Activated B cell treated with CpG ODN at 0.5 μM for 24 hours (primary cell): ENCODE measurements at regions of chr6 and their contacts with region 1.

Region 1: GRCh38 chr6:105484238-105485161 is 81.6 kb upstream of the PREP start:
- DNase-seq: no peak
- ATAC-seq: no peak
- H3K4me3 Mint-ChIP-seq: no peak overlapping the region
- H3K27ac Mint-ChIP-seq: no peak overlapping the region
- H3K4me1 Mint-ChIP-seq: peaks cover 2% of the 10 kb centered on the region
- H3K27me3 Mint-ChIP-seq: peaks cover 6% of the 10 kb centered on the region
- CTCF ChIP-seq: no peak

Region 2: GRCh38 chr6:105442369-105442768 is 42.1 kb before region 1 on chr6:
- CTCF ChIA-PET with region 1: no interaction called
- POLR2A ChIA-PET with region 1: no interaction called
- intact Hi-C with region 1: no loop called
- DNase-seq: no peak
- ATAC-seq: no peak
- H3K4me3 Mint-ChIP-seq: no peak overlapping the region
- H3K27ac Mint-ChIP-seq: no peak overlapping the region
- H3K4me1 Mint-ChIP-seq: no peaks in the 10 kb centered on the region
- H3K27me3 Mint-ChIP-seq: peaks cover 3% of the 10 kb centered on the region
- CTCF ChIP-seq: no peak

Region 3: GRCh38 chr6:105733565-105734162 is 249.2 kb after region 1 on chr6:
- CTCF ChIA-PET with region 1: no interaction called
- POLR2A ChIA-PET with region 1: no interaction called
- intact Hi-C with region 1: loop called (anchors 2 kb)
- DNase-seq: no peak
- ATAC-seq: no peak
- H3K4me3 Mint-ChIP-seq: no peak overlapping the region
- H3K27ac Mint-ChIP-seq: no peak overlapping the region
- H3K4me1 Mint-ChIP-seq: no peaks in the 10 kb centered on the region
- H3K27me3 Mint-ChIP-seq: no peaks in the 10 kb centered on the region
- CTCF ChIP-seq: peak; percentile 39

Region 4: GRCh38 chr6:106556368-106556960 is 1072.0 kb after region 1 on chr6:
- CTCF ChIA-PET with region 1: no interaction called
- POLR2A ChIA-PET with region 1: no interaction called
- intact Hi-C with region 1: loop called (anchors 10 kb)
- DNase-seq: no peak
- ATAC-seq: peak; percentile 31
- H3K4me3 Mint-ChIP-seq: no peak overlapping the region
- H3K27ac Mint-ChIP-seq: peak overlapping the region; percentile 13
- H3K4me1 Mint-ChIP-seq: peaks cover 22% of the 10 kb centered on the region
- H3K27me3 Mint-ChIP-seq: no peaks in the 10 kb centered on the region
- CTCF ChIP-seq: no peak